HAP-1 (cell line): ENCODE measurements at regions of chr3 and their contacts with region 1.

Region 1: GRCh38 chr3:112519424-112520001 is 20.2 kb upstream of the BTLA start:
- DNase-seq: peak; percentile 45 to 67
- H3K4me3 ChIP-seq: no peak overlapping the region
- H3K4me1 ChIP-seq: no peaks in the 10 kb centered on the region
- H3K27me3 ChIP-seq: no peaks in the 10 kb centered on the region

Region 2: GRCh38 chr3:111874177-111874820 is 645.2 kb before region 1 on chr3:
- in situ Hi-C with region 1: no loop called
- DNase-seq: no peak
- H3K4me3 ChIP-seq: no peak overlapping the region
- H3K4me1 ChIP-seq: no peaks in the 10 kb centered on the region; the same call in 1 of the 2 replicates
- H3K27me3 ChIP-seq: peaks cover 8% of the 10 kb centered on the region; the same call in 1 of the 2 replicates

Region 3: DNA sequence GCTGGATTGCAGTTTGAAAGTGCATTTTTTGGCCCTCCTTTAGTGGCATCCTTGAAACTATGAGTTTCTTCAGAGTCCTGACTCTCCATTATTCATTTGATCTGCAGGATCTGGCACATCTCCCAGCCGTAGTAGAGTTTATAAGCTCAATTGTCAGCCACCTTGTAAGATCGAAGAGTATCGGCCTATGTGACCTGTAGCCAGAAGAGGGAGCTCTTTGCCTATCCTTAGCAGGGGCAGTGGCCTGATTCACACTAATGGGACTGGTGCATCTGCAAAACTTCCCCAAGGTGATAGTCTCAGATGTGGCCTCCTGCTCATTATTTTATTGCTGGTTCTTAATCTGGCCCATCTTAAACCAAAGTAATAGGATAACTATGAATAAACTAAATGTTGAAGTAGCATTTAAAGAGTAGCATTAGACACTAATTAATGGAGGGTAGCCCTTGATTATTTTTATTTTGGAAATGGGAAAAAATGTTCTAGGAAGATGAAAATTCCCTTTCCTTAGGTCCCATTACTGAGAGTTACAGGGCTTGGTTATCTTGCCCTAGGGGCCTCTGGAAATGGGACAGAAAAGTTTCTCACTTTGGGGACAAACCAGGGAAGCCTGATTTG is 407.6 kb before region 1 on chr3:
- in situ Hi-C with region 1: loop called (anchors 10 kb)
- DNase-seq: peak; percentile 76 to 77
- H3K4me3 ChIP-seq: no peak overlapping the region
- H3K4me1 ChIP-seq: no peaks in the 10 kb centered on the region
- H3K27me3 ChIP-seq: no peaks in the 10 kb centered on the region

Region 4: GRCh38 chr3:112149136-112149535 is 370.4 kb before region 1 on chr3:
- in situ Hi-C with region 1: no loop called
- DNase-seq: no peak
- H3K4me3 ChIP-seq: no peak overlapping the region
- H3K4me1 ChIP-seq: no peaks in the 10 kb centered on the region
- H3K27me3 ChIP-seq: no peaks in the 10 kb centered on the region

Region 5: GRCh38 chr3:112333002-112333380 is 186.5 kb before region 1 on chr3 and contains the start of gene CD200:
- in situ Hi-C with region 1: loop called (anchors 10 kb)
- DNase-seq: peak; percentile 56 to 82
- H3K4me3 ChIP-seq: peak within 1 kb of the TSS; percentile 40
- H3K4me1 ChIP-seq: peaks cover 5% of the 10 kb centered on the region
- H3K27me3 ChIP-seq: no peaks in the 10 kb centered on the region